PC-9 (cell line): ENCODE measurements at regions of chr17 and their contacts with region 1.

Region 1: DNA sequence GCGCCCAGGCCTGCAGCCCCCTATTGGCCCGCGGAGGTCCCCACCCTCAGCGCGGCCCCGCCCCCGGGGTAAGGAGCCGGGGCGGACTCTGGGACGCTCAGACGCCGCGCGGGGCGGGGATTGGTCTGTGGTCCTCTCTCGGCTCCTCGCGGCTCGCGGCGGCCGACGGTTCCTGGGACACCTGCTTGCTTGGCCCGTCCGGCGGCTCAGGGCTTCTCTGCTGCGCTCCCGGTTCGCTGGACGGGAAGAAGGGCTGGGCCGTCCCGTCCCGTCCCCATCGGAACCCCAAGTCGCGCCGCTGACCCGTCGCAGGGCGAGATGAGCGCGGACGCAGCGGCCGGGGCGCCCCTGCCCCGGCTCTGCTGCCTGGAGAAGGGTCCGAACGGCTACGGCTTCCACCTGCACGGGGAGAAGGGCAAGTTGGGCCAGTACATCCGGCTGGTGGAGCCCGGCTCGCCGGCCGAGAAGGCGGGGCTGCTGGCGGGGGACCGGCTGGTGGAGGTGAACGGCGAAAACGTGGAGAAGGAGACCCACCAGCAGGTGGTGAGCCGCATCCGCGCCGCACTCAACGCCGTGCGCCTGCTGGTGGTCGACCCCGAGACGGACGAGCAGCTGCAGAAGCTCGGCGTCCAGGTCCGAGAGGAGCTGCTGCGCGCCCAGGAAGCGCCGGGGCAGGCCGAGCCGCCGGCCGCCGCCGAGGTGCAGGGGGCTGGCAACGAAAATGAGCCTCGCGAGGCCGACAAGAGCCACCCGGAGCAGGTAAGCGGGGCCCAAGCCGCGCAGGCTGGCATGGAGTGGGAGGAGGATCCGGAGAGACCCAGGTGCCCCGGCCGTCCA is at the start of gene NHERF1:
- DNase-seq: peak; percentile 30 to 78
- H3K4me3 ChIP-seq: peak within 1 kb of the TSS; percentile 99
- H3K27ac ChIP-seq: no peak within 1 kb of the TSS
- H3K4me1 ChIP-seq: peaks cover 39% of the 10 kb centered on the region
- H3K27me3 ChIP-seq: no peaks in the 10 kb centered on the region
- CTCF ChIP-seq: 0 out of 2 replicates have a peak, but pooled peaks have one; percentile 29
- total RNA-seq, gene NHERF1: 83.6 and 105 TPM in 2 replicates

Region 2: GRCh38 chr17:74659898-74660297 is 88.8 kb before region 1 on chr17:
- CTCF ChIA-PET with region 1: interaction called, 6 read pairs
- POLR2A ChIA-PET with region 1: no interaction called
- intact Hi-C with region 1: loop called (anchors 1 kb)
- DNase-seq: no peak
- H3K4me3 ChIP-seq: no peak overlapping the region
- H3K27ac ChIP-seq: no peak overlapping the region
- H3K4me1 ChIP-seq: no peaks in the 10 kb centered on the region
- H3K27me3 ChIP-seq: peaks cover 84% of the 10 kb centered on the region
- CTCF ChIP-seq: no peak

Region 3: DNA sequence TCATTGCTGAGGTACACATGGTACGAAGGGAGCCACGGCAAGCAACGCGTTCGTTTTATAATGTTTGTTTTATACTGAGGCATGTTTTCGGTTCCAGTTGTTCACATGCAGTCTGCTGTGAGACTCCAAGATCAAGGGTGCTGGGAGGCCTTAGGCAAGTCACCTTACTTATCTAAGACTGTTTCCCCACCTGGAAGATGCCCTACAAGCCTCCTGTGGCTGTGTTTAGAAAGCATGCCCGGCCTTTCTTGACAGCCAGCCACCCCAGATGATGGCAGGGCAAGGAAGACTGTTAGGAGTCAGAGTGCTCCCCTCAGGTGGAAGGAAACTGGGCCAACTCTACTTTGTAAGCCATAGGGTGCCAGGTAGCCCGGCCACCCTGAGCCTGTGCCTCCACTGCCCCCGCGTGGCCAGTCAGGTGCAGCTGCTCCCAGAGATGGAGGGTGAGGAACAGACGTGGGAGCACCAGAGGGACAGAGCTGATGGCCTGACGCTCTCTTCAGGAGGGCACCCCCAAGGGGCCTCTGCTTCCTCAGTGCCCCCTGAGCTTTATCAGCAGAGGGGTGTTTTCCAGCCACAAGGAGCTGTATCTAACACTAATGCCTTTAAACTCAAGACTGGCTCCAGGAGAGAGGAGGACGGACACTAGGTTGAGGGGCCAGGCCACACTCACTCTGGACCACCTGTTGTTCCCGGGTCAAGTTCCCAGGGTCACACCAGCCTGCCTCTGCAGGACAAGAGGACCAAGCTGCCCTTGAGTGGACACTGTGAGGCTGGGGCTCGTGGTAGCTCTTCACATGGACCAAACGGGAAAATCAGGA is 22.0 kb after region 1 on chr17:
- CTCF ChIA-PET with region 1: interaction called, 12 read pairs
- POLR2A ChIA-PET with region 1: interaction called, 5 read pairs
- intact Hi-C with region 1: loop called (anchors 1 kb)
- DNase-seq: peak; percentile 66 to 79
- H3K4me3 ChIP-seq: no peak overlapping the region
- H3K27ac ChIP-seq: no peak overlapping the region
- H3K4me1 ChIP-seq: peaks cover 19% of the 10 kb centered on the region
- H3K27me3 ChIP-seq: no peaks in the 10 kb centered on the region
- CTCF ChIP-seq: peak; percentile 88

Region 4: GRCh38 chr17:74784125-74784810 is 35.5 kb after region 1 on chr17:
- CTCF ChIA-PET with region 1: interaction called, 17 read pairs
- POLR2A ChIA-PET with region 1: no interaction called
- intact Hi-C with region 1: loop called (anchors 5 kb)
- DNase-seq: no peak
- H3K4me3 ChIP-seq: no peak overlapping the region
- H3K27ac ChIP-seq: no peak overlapping the region
- H3K4me1 ChIP-seq: no peaks in the 10 kb centered on the region
- H3K27me3 ChIP-seq: no peaks in the 10 kb centered on the region
- CTCF ChIP-seq: no peak

Region 5: GRCh38 chr17:74873038-74873873 is 124.5 kb after region 1 on chr17:
- CTCF ChIA-PET with region 1: interaction called, 12 read pairs
- POLR2A ChIA-PET with region 1: interaction called, 5 read pairs
- intact Hi-C with region 1: no loop called
- DNase-seq: peak; percentile 97 to 99
- H3K4me3 ChIP-seq: peak overlapping the region; percentile 85
- H3K27ac ChIP-seq: peak overlapping the region; percentile 64
- H3K4me1 ChIP-seq: peaks cover 23% of the 10 kb centered on the region
- H3K27me3 ChIP-seq: no peaks in the 10 kb centered on the region
- CTCF ChIP-seq: no peak

Region 6: GRCh38 chr17:74987418-74987908 is 238.7 kb after region 1 on chr17 and contains the start of gene CDR2L:
- CTCF ChIA-PET with region 1: no interaction called
- POLR2A ChIA-PET with region 1: interaction called, 38 read pairs
- intact Hi-C with region 1: no loop called
- DNase-seq: peak; percentile 81 to 97
- H3K4me3 ChIP-seq: peak within 1 kb of the TSS; percentile 84
- H3K27ac ChIP-seq: no peak within 1 kb of the TSS
- H3K4me1 ChIP-seq: peaks cover 39% of the 10 kb centered on the region
- H3K27me3 ChIP-seq: no peaks in the 10 kb centered on the region
- CTCF ChIP-seq: no peak
- total RNA-seq, gene CDR2L: 15.1 and 22.8 TPM in 2 replicates